Activated T-helper 2 cell treated with anti-CD3 and anti-CD28 coated beads, Interferon-gamma antibody, Interleukin-2, Interleukin-4, amounts not matched to agents 10 μg/mL and 5 μg/mL and 100 μg/mL, durations not matched to agents 14 hours and 24 hours and 36 hours (primary cell): ENCODE measurements at regions of chr17 and their contacts with region 1.

Region 1: DNA sequence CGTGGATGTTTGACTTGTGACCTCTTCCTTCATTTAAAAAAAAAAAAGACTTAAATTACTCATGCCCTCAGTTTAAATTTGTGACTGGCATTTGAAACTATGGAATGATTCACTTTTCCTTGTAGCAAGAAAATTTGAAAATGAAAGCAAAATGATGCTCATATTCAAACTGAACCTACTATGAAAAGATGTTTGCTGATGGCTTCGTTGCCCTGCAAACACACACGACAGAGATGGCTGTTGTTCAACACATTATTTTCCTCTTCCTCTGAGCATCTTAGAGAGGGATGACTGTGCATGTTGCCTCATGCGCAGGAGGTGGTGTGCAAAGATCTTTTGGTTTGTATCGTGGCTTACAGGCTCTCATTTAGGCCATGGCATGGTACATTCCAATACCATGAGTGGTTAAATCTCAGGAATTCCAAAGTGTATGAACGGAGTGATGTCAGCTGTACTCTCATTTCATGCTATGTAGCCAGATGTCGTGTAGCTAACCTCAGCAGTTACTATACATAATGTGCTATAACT is 164.5 kb downstream of the PRKCA start:
- DNase-seq: peak; percentile 48
- H3K4me3 Mint-ChIP-seq: peak overlapping the region; percentile 46
- H3K27ac Mint-ChIP-seq: peak overlapping the region; percentile 93
- H3K4me1 Mint-ChIP-seq: peaks cover 59% of the 10 kb centered on the region
- H3K27me3 Mint-ChIP-seq: no peaks in the 10 kb centered on the region

Region 2: GRCh38 chr17:66310528-66311148 is 156.3 kb before region 1 on chr17:
- intact Hi-C with region 1: loop called (anchors 2 kb)
- DNase-seq: no peak
- H3K4me3 Mint-ChIP-seq: peak overlapping the region; percentile 71
- H3K27ac Mint-ChIP-seq: peak overlapping the region; percentile 92
- H3K4me1 Mint-ChIP-seq: peaks cover 84% of the 10 kb centered on the region
- H3K27me3 Mint-ChIP-seq: no peaks in the 10 kb centered on the region

Region 3: GRCh38 chr17:66373944-66374817 is 92.7 kb before region 1 on chr17:
- intact Hi-C with region 1: loop called (anchors 1 kb)
- DNase-seq: peak; percentile 53
- H3K4me3 Mint-ChIP-seq: peak overlapping the region; percentile 64
- H3K27ac Mint-ChIP-seq: peak overlapping the region; percentile 89
- H3K4me1 Mint-ChIP-seq: peaks cover 67% of the 10 kb centered on the region
- H3K27me3 Mint-ChIP-seq: no peaks in the 10 kb centered on the region

Region 4: GRCh38 chr17:66420961-66421371 is 45.9 kb before region 1 on chr17:
- intact Hi-C with region 1: loop called (anchors 1 kb)
- DNase-seq: no peak
- H3K4me3 Mint-ChIP-seq: no peak overlapping the region
- H3K27ac Mint-ChIP-seq: peak overlapping the region; percentile 48
- H3K4me1 Mint-ChIP-seq: peaks cover 69% of the 10 kb centered on the region
- H3K27me3 Mint-ChIP-seq: no peaks in the 10 kb centered on the region

Region 5: GRCh38 chr17:66508896-66509843 is 42.3 kb after region 1 on chr17:
- intact Hi-C with region 1: loop called (anchors 1 kb)
- DNase-seq: peak; percentile 25
- H3K4me3 Mint-ChIP-seq: peak overlapping the region; percentile 27
- H3K27ac Mint-ChIP-seq: peak overlapping the region; percentile 92
- H3K4me1 Mint-ChIP-seq: peaks cover 71% of the 10 kb centered on the region
- H3K27me3 Mint-ChIP-seq: no peaks in the 10 kb centered on the region

Region 6: DNA sequence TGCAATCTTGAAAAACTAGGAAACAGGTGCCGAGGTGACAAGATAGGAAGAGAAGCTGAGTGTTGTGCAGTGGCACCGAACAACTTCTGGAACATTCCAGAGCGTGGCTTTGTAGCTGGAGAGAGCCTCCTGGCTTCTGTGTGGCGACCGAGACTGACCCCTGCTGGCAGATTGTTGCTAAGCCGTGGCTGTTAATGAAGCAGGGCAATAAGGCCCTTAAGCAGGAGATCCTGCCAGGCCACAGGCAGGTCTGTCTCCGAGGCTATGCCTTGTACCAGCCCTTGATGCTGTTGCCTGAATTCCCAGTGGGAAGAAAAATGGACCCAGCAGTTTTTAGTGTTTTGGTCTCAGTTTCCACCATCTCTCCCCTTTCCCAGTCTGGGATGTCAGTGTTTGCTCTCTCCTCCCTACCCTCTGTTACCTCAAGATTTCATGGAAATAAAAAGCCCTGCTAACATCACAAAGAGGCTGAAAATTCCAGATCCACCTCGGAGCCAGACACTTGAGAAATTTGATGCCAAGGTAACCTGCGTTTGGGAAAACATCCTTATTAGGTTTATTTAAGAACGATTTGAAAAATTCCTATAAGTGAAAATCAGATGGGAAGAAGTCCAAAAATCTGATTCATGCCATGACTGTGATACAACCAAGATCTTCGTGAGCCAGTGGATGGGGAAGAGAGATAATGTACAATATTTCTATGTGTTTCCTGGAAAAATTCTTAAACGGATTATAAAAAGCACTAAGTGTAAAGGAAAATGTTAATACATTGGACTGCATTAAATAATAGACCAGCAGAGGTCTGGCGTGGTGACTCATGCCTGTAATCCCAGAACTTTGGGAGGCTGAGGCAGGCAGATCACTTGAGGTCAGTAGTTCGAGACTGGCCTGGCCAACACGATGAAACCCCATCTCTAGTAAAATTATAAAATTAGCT is 100.6 kb after region 1 on chr17:
- intact Hi-C with region 1: loop called (anchors 5 kb)
- DNase-seq: peak; percentile 61
- H3K4me3 Mint-ChIP-seq: no peak overlapping the region
- H3K27ac Mint-ChIP-seq: peak overlapping the region; percentile 59
- H3K4me1 Mint-ChIP-seq: peaks cover 27% of the 10 kb centered on the region
- H3K27me3 Mint-ChIP-seq: no peaks in the 10 kb centered on the region